CD4-positive, alpha-beta memory T cell (primary cell): ENCODE measurements at regions of chr4 and their contacts with region 1.

Region 1: DNA sequence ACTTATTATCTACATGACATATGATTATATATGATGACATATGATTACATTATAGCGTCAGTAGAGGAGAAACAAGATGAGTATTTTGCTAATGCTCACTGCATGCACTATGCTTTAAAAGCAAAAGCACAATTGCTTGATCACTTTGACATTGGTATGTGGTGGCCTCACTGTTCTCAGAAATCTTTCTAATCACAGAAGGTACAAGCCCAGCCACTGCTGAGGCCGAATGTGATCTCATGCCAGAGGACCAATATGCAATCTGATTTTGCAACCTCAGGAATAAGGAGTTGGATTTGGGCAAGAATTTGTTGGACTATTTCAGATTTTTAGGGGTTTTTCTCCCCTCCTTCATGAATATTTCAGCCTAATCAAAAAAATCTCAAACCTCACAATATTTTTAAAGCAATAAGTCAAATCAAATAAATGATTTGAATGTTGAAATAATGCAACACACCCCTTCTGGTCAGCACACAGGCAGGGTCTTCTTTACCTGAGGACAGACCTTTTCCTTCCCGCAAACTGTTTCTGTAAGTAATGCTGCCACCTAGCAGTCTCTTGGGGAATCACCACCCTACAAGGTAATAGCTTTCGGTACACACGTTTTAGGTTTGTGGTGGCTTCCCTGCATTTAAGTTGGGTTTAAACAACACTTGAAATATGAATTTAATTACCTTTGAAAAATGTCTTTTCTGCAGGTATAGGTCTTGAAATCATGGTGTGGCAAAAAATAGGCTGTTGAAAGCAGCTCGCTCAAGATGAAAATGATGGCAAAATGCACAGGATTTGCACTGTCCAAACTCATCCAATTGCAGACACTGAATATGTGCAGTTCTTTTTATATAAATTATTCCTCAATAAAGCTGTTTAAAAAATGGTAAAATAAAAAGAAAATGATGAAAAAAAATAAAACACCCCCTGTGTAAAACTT is 4.8 kb upstream of the CXCL13 start:
- DNase-seq: peak in 4 of 5 donors; percentile 11 to 21 (median 13)
- H3K4me3 ChIP-seq: no peak overlapping the region
- H3K4me3 Mint-ChIP-seq: no peak overlapping the region
- H3K27ac ChIP-seq: no peak overlapping the region
- H3K27ac Mint-ChIP-seq: no peak overlapping the region
- H3K4me1 ChIP-seq: no peaks in the 10 kb centered on the region
- H3K4me1 Mint-ChIP-seq: peaks cover 0 to 4% (median 0%) of the 10 kb centered on the region in 4 donors
- H3K27me3 ChIP-seq: no peaks in the 10 kb centered on the region
- H3K27me3 Mint-ChIP-seq: peaks cover 10 to 13% of the 10 kb centered on the region in 2 donors

Region 2: DNA sequence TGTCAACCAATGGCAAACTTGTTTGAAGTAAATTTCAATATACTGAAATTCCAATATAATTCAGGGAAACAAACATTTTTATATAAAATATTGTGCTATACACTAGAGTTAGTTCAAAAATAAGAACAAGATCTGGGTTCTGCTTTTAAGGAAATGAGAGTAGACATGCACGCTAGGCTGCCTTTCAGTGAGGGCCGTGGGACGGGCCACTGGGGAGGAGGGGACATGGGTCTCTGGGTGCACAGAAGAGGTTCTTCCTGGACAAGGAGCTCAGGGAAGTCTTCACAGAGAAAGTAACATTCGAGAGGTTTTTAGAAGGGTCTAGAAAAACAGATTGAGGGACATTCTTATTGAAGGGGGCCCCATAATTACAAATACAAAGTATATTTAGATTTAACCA is 1101.3 kb before region 1 on chr4:
- CTCF ChIA-PET with region 1: no interaction called
- POLR2A ChIA-PET with region 1: no interaction called
- intact Hi-C with region 1: no loop called
- DNase-seq: no peak
- H3K4me3 ChIP-seq: no peak overlapping the region
- H3K4me3 Mint-ChIP-seq: no peak overlapping the region
- H3K27ac ChIP-seq: no peak overlapping the region
- H3K27ac Mint-ChIP-seq: no peak overlapping the region
- H3K4me1 ChIP-seq: no peaks in the 10 kb centered on the region
- H3K4me1 Mint-ChIP-seq: no peaks in the 10 kb centered on the region
- H3K27me3 ChIP-seq: no peaks in the 10 kb centered on the region
- H3K27me3 Mint-ChIP-seq: peaks cover 2 to 20% of the 10 kb centered on the region in 2 donors

Region 3: DNA sequence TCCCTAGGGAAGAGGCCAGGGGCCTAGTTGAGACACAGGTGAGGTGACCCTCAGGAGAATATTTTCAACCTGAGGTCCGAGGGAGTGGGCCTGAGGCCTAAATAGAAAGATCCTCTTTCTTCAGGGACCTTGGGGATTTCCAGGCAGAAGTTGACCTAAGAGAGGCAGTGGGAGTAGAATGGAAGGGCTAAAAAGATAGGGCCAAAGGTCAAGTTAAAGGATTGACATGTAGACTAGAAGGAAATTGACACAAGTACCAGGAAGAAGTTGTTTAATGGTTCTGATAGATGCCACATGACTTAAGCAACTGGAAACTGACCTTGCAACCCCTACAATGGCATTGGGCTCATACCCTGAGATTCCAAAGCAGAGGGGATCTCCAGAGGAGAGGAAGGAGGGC is 1088.8 kb before region 1 on chr4:
- CTCF ChIA-PET with region 1: no interaction called
- POLR2A ChIA-PET with region 1: no interaction called
- intact Hi-C with region 1: loop called (anchors 5 kb)
- DNase-seq: no peak
- H3K4me3 ChIP-seq: no peak overlapping the region
- H3K4me3 Mint-ChIP-seq: no peak overlapping the region
- H3K27ac ChIP-seq: no peak overlapping the region
- H3K27ac Mint-ChIP-seq: no peak overlapping the region
- H3K4me1 ChIP-seq: no peaks in the 10 kb centered on the region
- H3K4me1 Mint-ChIP-seq: no peaks in the 10 kb centered on the region
- H3K27me3 ChIP-seq: no peaks in the 10 kb centered on the region
- H3K27me3 Mint-ChIP-seq: no peaks in the 10 kb centered on the region

Region 4: DNA sequence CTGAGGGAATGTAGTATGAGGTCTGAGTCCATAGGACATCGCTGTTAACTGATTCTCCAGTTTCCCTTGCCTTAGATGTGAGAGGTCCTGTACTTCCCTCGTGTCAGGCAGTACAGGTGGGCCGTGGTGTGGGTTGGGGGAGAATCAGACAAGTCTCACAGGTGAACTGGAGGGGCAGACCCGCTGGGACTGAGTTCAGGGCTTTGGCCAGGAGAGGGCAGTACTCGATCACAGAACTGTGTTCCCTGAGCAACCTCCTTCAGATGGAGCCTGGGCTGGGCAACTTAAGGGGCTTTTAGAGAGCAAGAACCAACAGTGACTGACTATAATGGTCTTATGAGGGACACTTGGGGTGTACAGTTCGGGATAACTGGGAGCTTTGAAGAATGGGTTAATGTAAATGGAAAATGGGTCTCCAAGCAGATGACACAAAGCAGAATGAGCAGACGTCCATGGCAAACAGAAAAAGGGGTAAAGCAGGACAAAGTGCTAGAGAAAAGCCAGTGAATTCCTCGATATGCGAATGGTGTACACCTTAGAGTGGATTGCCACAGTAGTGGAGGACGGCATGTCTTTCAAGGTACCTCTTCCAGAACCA is 360.2 kb before region 1 on chr4:
- CTCF ChIA-PET with region 1: no interaction called
- POLR2A ChIA-PET with region 1: no interaction called
- intact Hi-C with region 1: loop called (anchors 1 kb)
- DNase-seq: peak in 4 of 5 donors; percentile 15 to 44 (median 21)
- H3K4me3 ChIP-seq: no peak overlapping the region
- H3K4me3 Mint-ChIP-seq: peak overlapping the region in 1 of 8 donors; percentile 3
- H3K27ac ChIP-seq: no peak overlapping the region
- H3K27ac Mint-ChIP-seq: peak overlapping the region in 1 of 7 donors; percentile 51
- H3K4me1 ChIP-seq: no peaks in the 10 kb centered on the region
- H3K4me1 Mint-ChIP-seq: no peaks in the 10 kb centered on the region
- H3K27me3 ChIP-seq: no peaks in the 10 kb centered on the region
- H3K27me3 Mint-ChIP-seq: peaks cover 9 to 13% of the 10 kb centered on the region in 2 donors

Region 5: GRCh38 chr4:77385124-77385969 is 215.4 kb before region 1 on chr4:
- CTCF ChIA-PET with region 1: interaction called, 16 read pairs
- POLR2A ChIA-PET with region 1: no interaction called
- intact Hi-C with region 1: loop called (anchors 1 kb)
- DNase-seq: peak in 4 of 5 donors; percentile 29 to 46 (median 36)
- H3K4me3 ChIP-seq: no peak overlapping the region
- H3K4me3 Mint-ChIP-seq: no peak overlapping the region
- H3K27ac ChIP-seq: no peak overlapping the region
- H3K27ac Mint-ChIP-seq: peak overlapping the region in 1 of 7 donors; percentile 2
- H3K4me1 ChIP-seq: no peaks in the 10 kb centered on the region
- H3K4me1 Mint-ChIP-seq: peaks cover 0 to 2% (median under 1%) of the 10 kb centered on the region in 4 donors
- H3K27me3 ChIP-seq: no peaks in the 10 kb centered on the region
- H3K27me3 Mint-ChIP-seq: peaks cover 0 to 3% of the 10 kb centered on the region in 2 donors

Region 6: DNA sequence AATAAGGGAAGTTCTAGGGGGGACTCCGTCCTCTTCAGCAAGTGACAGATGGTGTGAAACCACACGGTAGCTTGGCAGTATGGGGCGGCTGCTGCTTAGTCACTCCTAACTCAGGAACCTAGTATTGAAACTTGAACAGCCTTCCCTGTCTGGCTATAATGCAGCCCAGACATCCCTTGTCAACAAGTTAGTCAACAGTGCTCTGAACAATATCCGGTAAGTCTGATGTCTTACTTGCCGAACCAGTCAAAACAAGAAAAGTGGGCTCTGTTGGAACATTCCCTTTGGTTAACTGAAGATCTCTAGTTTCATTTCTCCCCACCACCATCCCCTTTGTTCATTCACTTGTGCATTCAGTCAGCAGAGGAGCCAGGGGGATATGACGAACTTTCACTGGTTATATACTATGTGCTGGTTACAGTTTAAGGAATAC is 13.8 kb before region 1 on chr4:
- CTCF ChIA-PET with region 1: interaction called, 39 read pairs
- POLR2A ChIA-PET with region 1: no interaction called
- intact Hi-C with region 1: no loop called
- DNase-seq: peak; percentile 10 to 54 (median 16)
- H3K4me3 ChIP-seq: no peak overlapping the region
- H3K4me3 Mint-ChIP-seq: peak overlapping the region in 5 of 8 donors; percentile 2 to 61 (median 21)
- H3K27ac ChIP-seq: no peak overlapping the region
- H3K27ac Mint-ChIP-seq: peak overlapping the region in 2 of 7 donors; percentile 25 to 36
- H3K4me1 ChIP-seq: peaks cover 10% of the 10 kb centered on the region
- H3K4me1 Mint-ChIP-seq: peaks cover 11 to 15% (median 12%) of the 10 kb centered on the region in 4 donors
- H3K27me3 ChIP-seq: no peaks in the 10 kb centered on the region
- H3K27me3 Mint-ChIP-seq: peaks cover 3 to 13% of the 10 kb centered on the region in 2 donors

Region 7: DNA sequence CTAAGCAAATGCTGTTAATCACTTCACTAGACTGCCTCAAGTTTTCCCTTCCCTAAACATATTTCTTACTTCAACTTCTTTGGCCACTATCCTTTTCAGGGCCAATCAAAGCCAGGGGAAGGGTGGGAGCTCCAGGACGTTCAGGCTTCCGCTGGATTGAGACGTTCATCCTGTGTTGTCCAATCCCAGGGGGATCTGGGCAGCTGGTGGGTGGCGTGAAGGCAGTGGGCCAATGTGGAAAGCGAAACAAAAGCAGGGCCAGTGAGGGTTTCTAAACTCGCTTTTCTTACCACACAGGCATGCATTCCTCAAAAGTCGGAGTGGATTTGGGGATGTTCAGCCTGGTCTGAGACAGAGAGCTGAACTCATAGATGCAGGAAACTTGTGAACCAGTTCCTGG is 12.5 kb after region 1 on chr4:
- CTCF ChIA-PET with region 1: interaction called, 13 read pairs
- POLR2A ChIA-PET with region 1: no interaction called
- intact Hi-C with region 1: no loop called
- DNase-seq: no peak
- H3K4me3 ChIP-seq: no peak overlapping the region
- H3K4me3 Mint-ChIP-seq: no peak overlapping the region
- H3K27ac ChIP-seq: no peak overlapping the region
- H3K27ac Mint-ChIP-seq: no peak overlapping the region
- H3K4me1 ChIP-seq: no peaks in the 10 kb centered on the region
- H3K4me1 Mint-ChIP-seq: no peaks in the 10 kb centered on the region
- H3K27me3 ChIP-seq: no peaks in the 10 kb centered on the region
- H3K27me3 Mint-ChIP-seq: peaks cover 13 to 17% of the 10 kb centered on the region in 2 donors

Region 8: DNA sequence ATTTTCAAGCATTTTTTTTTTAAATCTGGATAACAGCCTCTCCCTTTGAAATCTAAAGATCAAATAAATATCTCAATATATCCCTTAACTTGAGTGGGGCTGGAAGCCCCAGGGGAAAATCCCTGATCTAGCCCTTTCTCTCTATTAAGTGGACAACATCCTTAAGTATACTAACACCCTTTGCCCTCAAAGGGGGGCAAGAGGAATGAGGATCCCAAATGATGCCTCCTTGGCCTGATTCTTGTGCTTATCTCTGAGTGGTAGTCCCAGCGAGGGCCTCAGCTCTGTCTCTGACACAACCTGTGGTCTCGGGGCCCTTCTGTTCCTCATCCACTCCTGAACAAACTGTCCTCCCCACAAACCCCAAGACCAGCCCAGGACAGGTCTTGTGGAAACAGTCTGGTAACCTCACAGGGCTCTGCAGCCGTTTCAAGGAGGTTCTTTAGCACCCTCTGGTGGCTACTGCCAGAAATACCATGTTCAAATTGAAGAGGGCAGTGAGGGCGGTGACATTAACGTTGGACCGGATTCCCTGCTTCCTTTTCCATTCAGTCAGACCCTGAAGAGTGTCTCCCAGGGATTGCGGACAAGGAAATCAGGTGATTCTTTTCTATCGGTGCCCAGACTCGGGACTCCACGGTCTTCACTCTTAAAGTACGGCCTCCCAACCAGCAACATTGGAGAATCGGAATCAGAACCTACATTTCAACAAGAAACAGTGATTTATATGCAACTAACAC is 17.8 kb after region 1 on chr4:
- CTCF ChIA-PET with region 1: interaction called, 13 read pairs
- POLR2A ChIA-PET with region 1: no interaction called
- intact Hi-C with region 1: no loop called
- DNase-seq: peak; percentile 37 to 58 (median 45)
- H3K4me3 ChIP-seq: no peak overlapping the region
- H3K4me3 Mint-ChIP-seq: peak overlapping the region in 1 of 8 donors; percentile 45
- H3K27ac ChIP-seq: no peak overlapping the region
- H3K27ac Mint-ChIP-seq: no peak overlapping the region
- H3K4me1 ChIP-seq: peaks cover 3% of the 10 kb centered on the region
- H3K4me1 Mint-ChIP-seq: peaks cover 5 to 9% (median 6%) of the 10 kb centered on the region in 4 donors
- H3K27me3 ChIP-seq: no peaks in the 10 kb centered on the region
- H3K27me3 Mint-ChIP-seq: peaks cover 2 to 16% of the 10 kb centered on the region in 2 donors

Region 9: GRCh38 chr4:78426972-78427371 is 826.2 kb after region 1 on chr4:
- CTCF ChIA-PET with region 1: no interaction called
- POLR2A ChIA-PET with region 1: no interaction called
- intact Hi-C with region 1: no loop called
- DNase-seq: no peak
- H3K4me3 ChIP-seq: no peak overlapping the region
- H3K4me3 Mint-ChIP-seq: no peak overlapping the region
- H3K27ac ChIP-seq: no peak overlapping the region
- H3K27ac Mint-ChIP-seq: no peak overlapping the region
- H3K4me1 ChIP-seq: no peaks in the 10 kb centered on the region
- H3K4me1 Mint-ChIP-seq: no peaks in the 10 kb centered on the region
- H3K27me3 ChIP-seq: no peaks in the 10 kb centered on the region
- H3K27me3 Mint-ChIP-seq: peaks cover 0 to 5% of the 10 kb centered on the region in 2 donors